Colonic mucosa (tissue), 4 donors: ENCODE measurements at regions of chr17 and their contacts with region 1.

Region 1: DNA sequence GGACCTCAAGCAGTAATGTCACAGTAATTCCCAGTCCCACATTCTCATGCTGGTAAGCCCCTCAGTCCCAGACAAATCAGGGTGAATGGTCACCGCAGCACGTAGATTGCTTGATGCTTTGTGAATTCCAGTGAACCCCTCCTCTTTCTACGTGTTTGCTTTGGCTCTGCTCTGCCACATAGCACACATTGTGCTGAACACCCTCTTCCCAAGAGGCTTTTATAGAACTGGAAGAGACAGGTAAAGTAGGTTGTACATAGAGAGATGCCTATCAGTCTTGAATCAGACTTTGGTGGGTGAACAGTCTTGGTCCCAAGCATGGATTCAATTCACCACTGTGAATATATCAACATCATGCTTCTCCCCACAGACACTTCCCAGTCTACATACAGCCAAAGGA is 579 bp upstream of the KRTAP9-6 start:
- DNase-seq: no peak
- H3K4me3 ChIP-seq: no peak overlapping the region
- H3K27ac ChIP-seq: no peak overlapping the region
- H3K4me1 ChIP-seq: no peaks in the 10 kb centered on the region
- H3K27me3 ChIP-seq: no peaks in the 10 kb centered on the region
- CTCF ChIP-seq: no peak

Region 2: GRCh38 chr17:41190328-41190727 is 74.3 kb before region 1 on chr17:
- intact Hi-C with region 1: no loop called
- DNase-seq: no peak
- H3K4me3 ChIP-seq: no peak overlapping the region
- H3K27ac ChIP-seq: no peak overlapping the region
- H3K4me1 ChIP-seq: no peaks in the 10 kb centered on the region
- H3K27me3 ChIP-seq: no peaks in the 10 kb centered on the region
- CTCF ChIP-seq: no peak

Region 3: GRCh38 chr17:41278176-41278955 is 13.8 kb after region 1 on chr17:
- intact Hi-C with region 1: loop called (anchors 2 kb)
- DNase-seq: no peak
- H3K4me3 ChIP-seq: no peak overlapping the region
- H3K27ac ChIP-seq: no peak overlapping the region
- H3K4me1 ChIP-seq: no peaks in the 10 kb centered on the region
- H3K27me3 ChIP-seq: no peaks in the 10 kb centered on the region
- CTCF ChIP-seq: no peak